SK-N-SH (cell line): ENCODE measurements at regions of chr11 and their contacts with region 1.

Region 1: GRCh38 chr11:16820324-16821092 is 82.1 kb downstream of the C11orf58 start:
- DNase-seq: peak; percentile 74
- H3K4me3 ChIP-seq: peak overlapping the region in 1 of 2 experiments; percentile 41; a peak in 1 of 4 replicates
- H3K27ac ChIP-seq: no peak overlapping the region
- H3K4me1 ChIP-seq: peaks cover 0 to 6% of the 10 kb centered on the region in 2 experiments; a peak in 2 of 4 replicates
- H3K27me3 ChIP-seq: no peaks in the 10 kb centered on the region
- CTCF ChIP-seq: peak; percentile 93
- EP300 ChIP-seq: no peak
- RAD21 ChIP-seq: peak; percentile 80

Region 2: DNA sequence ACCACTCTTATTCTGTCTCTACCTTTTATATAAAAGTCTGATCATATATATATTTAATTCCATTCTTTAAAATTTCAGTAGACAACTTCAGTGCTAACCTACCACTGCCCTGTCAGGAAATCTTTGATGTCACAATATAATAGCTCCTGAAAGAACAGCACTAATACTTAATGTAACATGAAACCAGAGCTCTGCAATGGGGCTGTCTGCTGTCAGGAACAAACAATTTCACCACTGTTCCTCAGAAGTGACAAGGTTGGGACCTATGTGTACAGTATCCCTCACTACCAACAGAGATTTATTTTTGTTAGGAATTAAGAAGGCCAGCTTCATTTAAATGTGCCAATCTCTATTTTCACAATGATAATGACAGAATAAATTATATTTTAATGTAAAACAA is 247.6 kb before region 1 on chr11:
- CTCF ChIA-PET with region 1: no interaction called
- POLR2A ChIA-PET with region 1: no interaction called
- DNase-seq: no peak
- H3K4me3 ChIP-seq: no peak overlapping the region
- H3K27ac ChIP-seq: no peak overlapping the region
- H3K4me1 ChIP-seq: no peaks in the 10 kb centered on the region; a peak in 3 of 4 replicates
- H3K27me3 ChIP-seq: no peaks in the 10 kb centered on the region
- CTCF ChIP-seq: no peak
- EP300 ChIP-seq: no peak
- RAD21 ChIP-seq: no peak

Region 3: DNA sequence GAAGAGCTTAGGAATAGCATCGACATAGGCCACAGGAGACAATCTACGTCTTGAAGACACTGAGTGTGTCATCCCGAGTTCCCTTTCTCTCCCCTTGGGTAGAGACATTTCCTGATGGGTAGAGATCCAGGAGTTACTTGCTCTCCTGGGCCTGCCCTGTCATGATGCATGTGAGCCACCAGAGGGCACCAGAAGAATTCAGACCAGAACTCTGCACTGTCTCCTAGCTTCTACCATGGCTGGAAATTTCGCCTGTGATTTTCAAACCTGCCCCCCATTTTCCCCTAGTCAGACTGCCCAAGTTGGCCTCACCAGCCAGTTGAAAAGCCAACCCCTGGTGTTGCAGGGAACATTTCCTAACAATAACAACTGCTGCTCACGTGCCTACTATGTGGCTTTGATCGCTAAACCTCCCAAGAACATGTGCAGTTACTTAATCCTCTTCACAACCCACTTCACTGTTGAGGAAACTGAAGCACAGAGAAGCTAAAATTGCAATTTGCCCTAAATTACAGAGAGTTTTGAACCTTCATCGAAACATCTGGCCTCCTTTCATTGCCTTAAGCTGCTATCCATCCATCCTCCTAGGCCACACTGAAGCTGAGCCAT is 34.9 kb before region 1 on chr11:
- CTCF ChIA-PET with region 1: interaction called, 18 read pairs
- POLR2A ChIA-PET with region 1: no interaction called
- DNase-seq: peak; percentile 84
- H3K4me3 ChIP-seq: peak overlapping the region in 1 of 2 experiments; percentile 7; a peak in 1 of 4 replicates
- H3K27ac ChIP-seq: no peak overlapping the region
- H3K4me1 ChIP-seq: peaks cover 0 to 5% of the 10 kb centered on the region in 2 experiments; a peak in 2 of 4 replicates
- H3K27me3 ChIP-seq: no peaks in the 10 kb centered on the region
- CTCF ChIP-seq: peak; percentile 89
- EP300 ChIP-seq: no peak
- RAD21 ChIP-seq: peak; percentile 87

Region 4: DNA sequence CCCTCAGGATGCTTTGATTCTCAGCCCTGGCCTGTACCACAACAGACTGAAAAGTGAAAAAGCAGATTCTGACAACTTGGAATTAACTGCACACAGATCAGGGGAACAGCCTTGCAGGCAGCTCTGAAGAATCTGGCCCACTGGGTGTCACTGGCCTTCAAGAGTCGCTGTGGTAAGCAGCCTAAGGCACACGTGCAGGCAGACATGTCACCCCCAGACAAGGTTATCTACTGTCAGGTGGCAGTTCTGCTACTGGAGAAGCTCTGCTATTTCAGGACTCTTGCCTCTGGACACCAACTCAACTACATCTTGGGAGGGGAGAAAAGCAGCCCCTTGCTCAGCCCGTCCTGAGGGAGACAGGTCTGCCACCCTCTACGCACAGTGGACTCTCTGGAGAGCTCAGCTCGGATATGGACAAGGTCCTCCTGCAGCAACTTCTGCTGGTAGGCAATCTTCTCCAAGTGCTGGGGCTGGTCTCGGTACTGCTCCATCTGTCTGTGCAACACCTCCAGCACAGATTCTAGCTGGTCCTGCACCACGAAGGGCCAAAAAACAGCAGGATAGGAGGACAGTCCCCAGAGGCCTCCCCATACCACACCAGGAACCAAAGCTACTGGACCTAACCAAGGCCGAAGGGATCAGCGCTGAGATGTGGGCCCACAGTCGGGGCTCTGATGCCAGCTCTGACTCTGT is 19.1 kb before region 1 on chr11:
- CTCF ChIA-PET with region 1: interaction called, 80 read pairs
- POLR2A ChIA-PET with region 1: no interaction called
- DNase-seq: no peak
- H3K4me3 ChIP-seq: no peak overlapping the region
- H3K27ac ChIP-seq: no peak overlapping the region
- H3K4me1 ChIP-seq: peaks cover 0 to 20% of the 10 kb centered on the region in 2 experiments; a peak in 1 of 4 replicates
- H3K27me3 ChIP-seq: no peaks in the 10 kb centered on the region
- CTCF ChIP-seq: no peak
- EP300 ChIP-seq: no peak
- RAD21 ChIP-seq: no peak

Region 5: GRCh38 chr11:16831316-16832192 is 11.0 kb after region 1 on chr11:
- CTCF ChIA-PET with region 1: interaction called, 84 read pairs
- POLR2A ChIA-PET with region 1: no interaction called
- DNase-seq: no peak
- H3K4me3 ChIP-seq: no peak overlapping the region
- H3K27ac ChIP-seq: no peak overlapping the region
- H3K4me1 ChIP-seq: no peaks in the 10 kb centered on the region
- H3K27me3 ChIP-seq: no peaks in the 10 kb centered on the region; the same call in 1 of the 2 replicates
- CTCF ChIP-seq: no peak
- EP300 ChIP-seq: no peak
- RAD21 ChIP-seq: no peak

Region 6: DNA sequence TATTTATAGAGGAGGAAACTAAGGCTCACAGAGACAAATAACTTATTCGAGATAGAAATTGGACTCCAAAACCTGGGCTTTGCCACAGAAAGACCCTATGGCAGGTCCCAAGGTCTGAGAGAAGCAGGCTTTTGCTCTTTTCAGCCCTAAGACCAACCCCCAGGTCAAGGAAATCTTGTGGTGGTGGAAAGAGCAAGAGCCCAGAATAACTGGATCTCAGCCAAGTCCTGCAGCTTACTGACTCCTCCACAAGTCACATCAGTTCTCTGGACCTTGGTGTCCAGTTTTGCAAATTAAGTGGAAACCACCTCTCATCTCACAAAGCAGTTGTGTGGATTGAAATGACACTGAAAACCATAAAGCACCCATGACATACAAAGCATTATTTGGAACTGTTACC is 40.1 kb after region 1 on chr11:
- CTCF ChIA-PET with region 1: interaction called, 13 read pairs
- POLR2A ChIA-PET with region 1: no interaction called
- DNase-seq: no peak
- H3K4me3 ChIP-seq: no peak overlapping the region
- H3K27ac ChIP-seq: no peak overlapping the region
- H3K4me1 ChIP-seq: peaks cover 0 to 19% of the 10 kb centered on the region in 2 experiments; a peak in 1 of 4 replicates
- H3K27me3 ChIP-seq: peaks cover 9% of the 10 kb centered on the region; the same call in 1 of the 2 replicates
- CTCF ChIP-seq: no peak
- EP300 ChIP-seq: no peak
- RAD21 ChIP-seq: no peak

Region 7: DNA sequence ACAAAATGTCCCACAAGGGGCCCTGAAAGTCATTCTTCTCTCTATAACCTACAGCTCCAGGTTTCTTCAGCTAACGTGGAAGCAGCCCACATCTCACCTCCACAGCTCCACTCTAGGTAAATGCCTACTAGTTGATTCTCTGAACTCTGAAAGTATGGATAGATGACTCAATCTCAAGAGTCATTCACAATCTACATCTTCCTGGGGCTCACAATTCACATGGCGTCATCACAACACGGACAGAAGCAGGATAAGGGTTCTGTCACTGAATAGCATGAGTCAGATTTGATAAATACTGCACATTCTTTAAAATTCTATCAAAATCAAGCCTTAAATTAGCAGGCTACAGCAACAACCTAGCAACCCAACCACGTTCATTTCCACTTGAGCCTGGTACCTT is 97.4 kb after region 1 on chr11:
- CTCF ChIA-PET with region 1: interaction called, 14 read pairs
- POLR2A ChIA-PET with region 1: no interaction called
- DNase-seq: no peak
- H3K4me3 ChIP-seq: no peak overlapping the region
- H3K27ac ChIP-seq: no peak overlapping the region
- H3K4me1 ChIP-seq: 0 out of 4 replicates have a peak, but pooled peaks cover 0 to 2% of the 10 kb centered on the region in 2 experiments
- H3K27me3 ChIP-seq: peaks cover 5% of the 10 kb centered on the region; the same call in 1 of the 2 replicates
- CTCF ChIP-seq: no peak
- EP300 ChIP-seq: no peak
- RAD21 ChIP-seq: no peak

Region 8: DNA sequence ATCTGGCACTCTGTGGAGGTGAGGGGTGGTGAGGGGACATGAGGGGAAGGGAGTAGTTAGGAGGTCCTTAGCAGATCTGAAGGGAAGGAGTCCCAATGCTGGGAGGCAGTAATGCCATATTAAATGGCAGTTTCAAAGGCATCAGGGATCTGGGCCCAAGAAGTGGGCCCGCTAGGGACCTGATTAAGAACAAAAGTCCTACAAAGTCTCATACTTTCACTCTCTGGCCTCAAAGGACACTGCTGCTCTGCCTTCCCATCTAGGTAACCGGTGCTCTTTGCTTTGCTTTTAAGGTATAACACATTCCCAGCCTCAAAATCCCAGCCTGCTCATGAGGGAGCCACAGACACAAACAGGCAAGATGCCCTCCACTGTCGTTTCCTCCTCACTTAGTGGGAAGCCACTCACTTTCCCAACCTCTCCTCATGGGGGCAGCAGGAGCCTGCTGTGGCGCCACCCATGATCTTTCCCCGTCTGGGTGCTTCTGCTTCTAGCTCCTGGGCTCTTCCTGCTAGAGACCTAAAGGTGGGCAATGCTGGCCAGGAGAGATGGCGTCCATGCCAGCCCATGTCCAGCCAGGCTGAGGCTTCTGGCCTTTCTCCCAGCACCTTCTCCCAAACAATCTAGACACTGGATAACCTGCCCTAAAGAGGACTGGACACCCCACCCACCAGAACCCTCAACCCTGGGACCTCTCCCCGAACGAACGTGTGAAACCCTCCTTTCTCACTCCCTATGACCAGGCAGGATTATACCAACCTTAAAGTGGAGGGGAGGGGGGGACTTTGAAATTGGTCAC is 125.4 kb after region 1 on chr11:
- CTCF ChIA-PET with region 1: interaction called, 17 read pairs
- POLR2A ChIA-PET with region 1: no interaction called
- DNase-seq: peak; percentile 77
- H3K4me3 ChIP-seq: no peak overlapping the region
- H3K27ac ChIP-seq: no peak overlapping the region
- H3K4me1 ChIP-seq: no peaks in the 10 kb centered on the region
- H3K27me3 ChIP-seq: peaks cover 6% of the 10 kb centered on the region; the same call in 1 of the 2 replicates
- CTCF ChIP-seq: peak; percentile 52
- EP300 ChIP-seq: no peak
- RAD21 ChIP-seq: peak; percentile 97